ENCODE measurements at regions of chr13 and their contacts with region 1.

Region 1: GRCh38 chr13:19622188-19622587 is 11.3 kb upstream of the MPHOSPH8 start:
- DNase-seq: no peak
- H3K4me3 ChIP-seq: no peak overlapping the region
- H3K27ac ChIP-seq: no peak overlapping the region
- H3K4me1 ChIP-seq: no peaks in the 10 kb centered on the region
- H3K27me3 ChIP-seq: no peaks in the 10 kb centered on the region

Region 2: DNA sequence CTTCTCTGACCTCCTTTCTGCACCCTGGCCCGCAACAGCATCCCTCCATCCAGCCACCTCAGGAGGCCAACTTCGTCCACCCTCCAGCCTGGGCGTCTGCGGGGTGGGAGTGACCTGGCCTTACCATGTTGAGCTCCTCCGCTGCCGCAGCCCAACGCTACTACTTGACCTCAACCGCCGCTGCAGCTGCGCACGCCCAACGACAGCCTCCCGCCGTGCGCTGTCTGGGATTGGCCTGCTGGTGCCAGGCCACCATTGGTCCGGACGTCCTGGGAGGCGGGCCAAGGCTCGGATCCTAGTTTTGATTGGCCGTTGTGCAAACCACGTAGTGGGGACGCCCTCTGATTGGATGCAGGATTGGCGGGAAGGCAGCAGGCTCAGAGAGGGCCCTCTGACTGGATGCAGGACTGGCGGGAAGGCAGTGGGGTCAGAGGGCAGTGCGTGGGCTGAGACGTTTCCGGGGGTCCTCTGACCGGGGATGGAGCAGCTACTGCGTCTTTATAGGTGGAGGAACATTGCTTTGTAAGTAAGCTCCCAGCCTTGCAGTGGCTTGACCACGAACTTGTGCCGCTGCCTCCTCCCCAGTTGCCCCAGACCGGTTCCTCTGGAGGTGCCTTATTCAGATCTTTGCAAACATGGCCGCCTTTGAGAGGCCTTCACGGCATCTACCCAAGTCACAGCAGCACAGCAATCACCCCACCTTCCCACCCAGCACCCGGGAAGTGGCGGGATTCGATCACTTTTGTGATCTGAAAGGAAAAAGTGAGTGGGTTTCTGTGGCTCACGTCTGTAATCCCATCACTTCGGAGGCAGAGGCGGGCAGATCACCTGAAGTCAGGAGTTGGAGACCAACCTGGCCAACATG is 440.3 kb before region 1 on chr13 and contains the start of gene TUBA3C:
- in situ Hi-C with region 1: no loop called
- DNase-seq: no peak
- H3K4me3 ChIP-seq: no peak within 1 kb of the TSS
- H3K27ac ChIP-seq: no peak within 1 kb of the TSS
- H3K4me1 ChIP-seq: no peaks in the 10 kb centered on the region
- H3K27me3 ChIP-seq: no peaks in the 10 kb centered on the region
- total RNA-seq, gene TUBA3C: not detected in 2 replicates

Region 3: GRCh38 chr13:19681517-19681916 is 59.3 kb after region 1 on chr13:
- in situ Hi-C with region 1: loop called (anchors 10 kb)
- DNase-seq: no peak
- H3K4me3 ChIP-seq: no peak overlapping the region
- H3K27ac ChIP-seq: no peak overlapping the region
- H3K4me1 ChIP-seq: no peaks in the 10 kb centered on the region
- H3K27me3 ChIP-seq: no peaks in the 10 kb centered on the region

Region 4: DNA sequence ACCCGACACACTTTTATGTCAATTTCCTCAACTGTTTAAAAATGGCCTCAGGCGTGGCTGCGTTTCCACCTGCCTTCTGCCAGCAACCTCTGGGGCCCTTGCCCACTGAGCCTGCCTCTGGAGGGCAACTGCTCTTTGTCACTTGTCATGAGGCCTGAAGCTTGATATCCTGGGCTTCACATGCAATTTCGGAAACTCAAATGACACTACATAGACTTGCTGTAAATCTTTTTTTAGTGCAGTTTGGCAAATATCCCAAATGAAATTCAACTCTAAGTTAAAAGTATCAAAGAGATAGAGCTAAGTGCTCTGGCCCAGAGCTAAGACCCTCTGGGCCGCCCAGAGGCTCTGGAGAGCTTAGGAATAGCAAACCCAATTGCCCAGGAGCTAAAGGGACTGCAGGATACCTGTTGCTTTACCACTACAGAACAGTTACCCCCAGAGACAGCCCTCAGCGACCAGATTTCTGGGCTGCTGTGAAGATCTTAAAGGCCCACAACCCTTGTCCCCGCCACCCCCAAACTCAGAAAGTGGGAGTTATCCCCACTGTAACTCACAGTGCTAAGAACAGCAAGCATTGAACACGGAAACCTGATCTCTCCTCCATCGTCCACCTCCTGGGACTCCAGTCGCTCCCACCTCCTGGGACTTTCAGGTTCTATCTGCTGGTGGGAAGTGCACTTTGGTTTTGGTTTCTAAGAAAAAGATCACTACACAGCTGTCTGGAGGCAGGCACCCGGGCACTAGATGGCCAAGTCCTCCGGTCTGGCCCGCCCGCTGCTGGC is 519.2 kb after region 1 on chr13:
- in situ Hi-C with region 1: no loop called
- DNase-seq: no peak
- H3K4me3 ChIP-seq: no peak overlapping the region
- H3K27ac ChIP-seq: no peak overlapping the region
- H3K4me1 ChIP-seq: no peaks in the 10 kb centered on the region
- H3K27me3 ChIP-seq: peaks cover 12% of the 10 kb centered on the region; the same call in 1 of the 2 replicates

Region 5: DNA sequence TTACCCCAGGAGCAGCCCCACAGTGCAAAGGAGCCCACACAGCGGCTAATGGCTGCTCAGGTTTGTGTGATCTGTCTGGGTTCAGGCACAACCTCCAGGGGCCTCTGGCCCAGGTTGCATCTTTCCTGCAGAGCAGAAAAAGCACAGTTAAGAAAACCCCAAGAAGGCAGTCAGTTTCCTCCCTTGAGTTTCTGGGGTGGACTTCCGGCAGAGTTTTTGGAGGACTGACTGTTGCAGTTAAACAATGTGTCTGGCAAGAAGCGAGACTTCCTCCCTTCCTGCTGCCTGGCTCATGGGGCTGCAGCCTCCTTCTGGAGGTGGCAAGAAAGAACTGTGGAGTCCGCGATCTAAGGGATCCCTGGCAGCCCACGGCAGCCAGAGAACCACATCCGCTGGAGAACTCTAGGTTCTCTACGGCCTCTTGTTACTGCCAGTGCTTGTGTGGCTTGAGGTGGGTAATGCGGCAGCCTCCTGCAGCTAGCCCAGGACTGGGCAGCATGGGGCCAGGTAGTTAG is 1722.5 kb after region 1 on chr13:
- in situ Hi-C with region 1: no loop called
- DNase-seq: no peak
- H3K4me3 ChIP-seq: no peak overlapping the region
- H3K27ac ChIP-seq: no peak overlapping the region
- H3K4me1 ChIP-seq: no peaks in the 10 kb centered on the region
- H3K27me3 ChIP-seq: no peaks in the 10 kb centered on the region

Measured in GM23248 (cell line).